ENCODE measurements at regions of chr14 and their contacts with region 1.

Region 1: GRCh38 chr14:105300792-105301533 is at the start of gene BRF1:
- DNase-seq: peak; percentile 88 to 97
- ATAC-seq: peak; percentile 91 to 93
- H3K4me3 ChIP-seq: peak within 1 kb of the TSS; percentile 99
- H3K27ac ChIP-seq: peak within 1 kb of the TSS; percentile 96 to 98
- H3K4me1 ChIP-seq: 0 out of 3 replicates have a peak, but pooled peaks cover 3% of the 10 kb centered on the region
- CTCF ChIP-seq: no peak
- EP300 ChIP-seq: no peak
- POLR2A ChIP-seq: no peak; the same call in 1 of the 2 replicates
- RAD21 ChIP-seq: no peak
- polyA plus RNA-seq, gene BRF1: 7.0 and 8.5 TPM in 2 replicates

Region 2: GRCh38 chr14:105075379-105076295 is 225.3 kb before region 1 on chr14:
- CTCF ChIA-PET with region 1: no interaction called
- POLR2A ChIA-PET with region 1: no interaction called
- DNase-seq: no peak
- ATAC-seq: peak; percentile 5; a peak in 2 of 6 replicates
- H3K4me3 ChIP-seq: no peak overlapping the region
- H3K27ac ChIP-seq: peak overlapping the region in 1 of 2 experiments; percentile 50; a peak in 3 of 6 replicates
- H3K4me1 ChIP-seq: peaks cover 6% of the 10 kb centered on the region; the same call in 1 of the 3 replicates
- CTCF ChIP-seq: no peak
- EP300 ChIP-seq: no peak
- POLR2A ChIP-seq: no peak
- RAD21 ChIP-seq: no peak

Region 3: DNA sequence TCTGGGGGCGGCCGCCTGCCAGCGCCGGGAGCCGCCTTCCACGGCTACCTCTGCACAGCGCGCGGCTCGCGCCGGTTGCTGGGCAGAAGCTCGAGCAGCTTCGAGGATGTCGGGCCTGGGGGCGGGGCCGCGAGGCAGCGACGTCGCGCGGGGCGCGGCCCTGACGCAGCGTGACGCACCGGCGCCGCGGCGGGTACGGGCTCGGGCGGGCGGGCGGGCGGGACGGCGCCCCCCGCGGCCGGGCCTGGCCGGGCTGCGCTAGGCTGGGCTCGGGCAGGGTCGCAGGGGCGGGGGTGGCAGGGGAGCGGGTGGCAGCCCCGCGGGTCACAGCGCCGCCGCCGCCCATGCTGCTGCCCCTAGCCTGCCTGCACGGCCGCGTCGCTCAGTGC is 52.6 kb before region 1 on chr14 and contains the start of gene BTBD6:
- CTCF ChIA-PET with region 1: no interaction called
- POLR2A ChIA-PET with region 1: interaction called, 12 read pairs
- DNase-seq: peak; percentile 85
- ATAC-seq: peak; percentile 85 to 92
- H3K4me3 ChIP-seq: peak within 1 kb of the TSS; percentile 80
- H3K27ac ChIP-seq: peak within 1 kb of the TSS; percentile 94 to 96
- H3K4me1 ChIP-seq: peaks cover 13% of the 10 kb centered on the region
- CTCF ChIP-seq: peak; percentile 38; the same call in 2 of the 3 replicates
- EP300 ChIP-seq: no peak
- POLR2A ChIP-seq: peak; percentile 66; the same call in 1 of the 2 replicates
- RAD21 ChIP-seq: no peak
- polyA plus RNA-seq, gene BTBD6: 16.1 and 19.3 TPM in 2 replicates

Region 4: DNA sequence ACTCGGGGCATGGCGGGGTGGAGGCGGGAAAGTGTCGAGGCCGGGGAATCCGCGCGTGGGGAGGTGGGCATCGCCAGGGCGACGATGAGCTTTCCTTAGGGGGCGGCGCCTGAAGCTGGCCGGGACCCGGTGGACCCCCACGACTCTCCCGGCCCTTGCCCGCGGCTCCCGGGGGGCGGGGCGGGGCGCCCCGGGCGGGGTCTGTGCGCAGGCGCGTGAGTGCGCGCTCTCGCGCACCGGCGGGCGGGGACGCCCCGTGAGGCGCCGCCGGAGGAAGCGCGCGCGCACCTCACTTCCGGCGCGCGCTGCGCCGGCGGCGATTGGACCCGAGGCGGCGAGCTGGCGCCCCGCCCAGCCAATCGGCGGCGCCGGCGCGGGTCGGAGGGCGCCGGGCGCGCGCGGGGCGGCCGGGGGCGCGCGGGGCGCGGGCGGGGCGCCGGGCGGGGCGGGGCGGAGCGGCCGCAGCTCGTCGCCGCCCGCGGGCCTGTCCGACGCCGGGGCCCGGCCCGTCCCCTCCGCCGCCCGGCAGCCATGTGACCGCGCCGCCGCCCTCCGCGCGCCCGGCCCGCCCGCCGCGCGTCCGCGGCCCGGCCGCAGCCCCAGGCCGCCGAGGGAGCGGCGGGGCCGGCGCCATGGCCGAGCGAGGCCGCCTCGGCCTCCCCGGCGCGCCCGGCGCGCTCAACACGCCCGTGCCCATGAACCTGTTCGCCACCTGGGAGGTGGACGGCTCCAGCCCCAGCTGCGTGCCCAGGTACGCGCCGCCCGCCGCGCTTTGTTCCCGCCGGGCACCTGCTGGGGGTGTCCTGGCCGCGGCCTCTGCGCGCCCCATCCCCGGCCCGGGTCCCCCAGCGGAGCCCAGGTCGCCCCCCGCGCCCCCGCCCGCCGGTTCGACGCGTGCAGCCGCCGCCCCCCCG is 13.6 kb after region 1 on chr14 and contains the start of gene PACS2:
- CTCF ChIA-PET with region 1: interaction called, 6 read pairs
- POLR2A ChIA-PET with region 1: interaction called, 38 read pairs
- DNase-seq: peak; percentile 81 to 95
- ATAC-seq: peak; percentile 67 to 81
- H3K4me3 ChIP-seq: peak within 1 kb of the TSS; percentile 100
- H3K27ac ChIP-seq: peak within 1 kb of the TSS; percentile 95 to 99
- H3K4me1 ChIP-seq: peaks cover 16% of the 10 kb centered on the region
- CTCF ChIP-seq: no peak
- EP300 ChIP-seq: no peak
- POLR2A ChIP-seq: peak; percentile 52
- RAD21 ChIP-seq: no peak
- polyA plus RNA-seq, gene PACS2: 11.9 and 13.1 TPM in 2 replicates

Region 5: GRCh38 chr14:105363847-105364708 is 63.1 kb after region 1 on chr14:
- CTCF ChIA-PET with region 1: no interaction called
- POLR2A ChIA-PET with region 1: no interaction called
- DNase-seq: peak in 1 of 2 experiments; percentile 20
- ATAC-seq: peak; percentile 54 to 70; a peak in 5 of 6 replicates
- H3K4me3 ChIP-seq: no peak overlapping the region
- H3K27ac ChIP-seq: no peak overlapping the region
- H3K4me1 ChIP-seq: no peaks in the 10 kb centered on the region
- CTCF ChIP-seq: no peak
- EP300 ChIP-seq: no peak
- POLR2A ChIP-seq: no peak
- RAD21 ChIP-seq: no peak

Measured in A549 (cell line).